Left ventricle myocardium inferior (tissue), 1 donor: ENCODE measurements at regions of chr2 and their contacts with region 1.

Region 1: GRCh38 chr2:73163483-73164367 is 38.6 kb upstream of the NOTO start:
- DNase-seq: peak; percentile 50
- H3K4me3 ChIP-seq: no peak overlapping the region
- H3K27ac ChIP-seq: no peak overlapping the region
- H3K4me1 ChIP-seq: no peaks in the 10 kb centered on the region
- H3K27me3 ChIP-seq: peaks cover 21% of the 10 kb centered on the region
- CTCF ChIP-seq: peak; percentile 92

Region 2: DNA sequence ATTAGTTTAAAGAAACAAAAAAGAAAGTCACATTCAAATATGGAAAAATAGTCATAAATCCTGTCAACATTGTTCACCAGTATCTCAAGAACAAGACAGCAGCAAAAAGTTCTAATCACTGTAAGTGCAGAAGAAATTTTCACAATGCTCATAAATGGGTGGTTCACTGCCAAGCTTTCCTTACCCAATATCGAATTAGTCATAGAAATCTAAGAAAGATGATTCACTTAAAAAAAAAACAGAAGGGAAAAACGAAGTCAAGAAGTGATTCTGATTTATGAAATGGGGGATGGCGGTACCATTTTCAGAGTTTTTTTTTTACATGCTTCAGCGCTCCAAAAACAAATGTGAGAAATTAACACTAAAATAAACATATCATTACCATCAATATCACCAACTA is 494.6 kb before region 1 on chr2:
- intact Hi-C with region 1: no loop called
- DNase-seq: no peak
- H3K4me3 ChIP-seq: no peak overlapping the region
- H3K27ac ChIP-seq: no peak overlapping the region
- H3K4me1 ChIP-seq: no peaks in the 10 kb centered on the region
- H3K27me3 ChIP-seq: no peaks in the 10 kb centered on the region
- CTCF ChIP-seq: no peak

Region 3: DNA sequence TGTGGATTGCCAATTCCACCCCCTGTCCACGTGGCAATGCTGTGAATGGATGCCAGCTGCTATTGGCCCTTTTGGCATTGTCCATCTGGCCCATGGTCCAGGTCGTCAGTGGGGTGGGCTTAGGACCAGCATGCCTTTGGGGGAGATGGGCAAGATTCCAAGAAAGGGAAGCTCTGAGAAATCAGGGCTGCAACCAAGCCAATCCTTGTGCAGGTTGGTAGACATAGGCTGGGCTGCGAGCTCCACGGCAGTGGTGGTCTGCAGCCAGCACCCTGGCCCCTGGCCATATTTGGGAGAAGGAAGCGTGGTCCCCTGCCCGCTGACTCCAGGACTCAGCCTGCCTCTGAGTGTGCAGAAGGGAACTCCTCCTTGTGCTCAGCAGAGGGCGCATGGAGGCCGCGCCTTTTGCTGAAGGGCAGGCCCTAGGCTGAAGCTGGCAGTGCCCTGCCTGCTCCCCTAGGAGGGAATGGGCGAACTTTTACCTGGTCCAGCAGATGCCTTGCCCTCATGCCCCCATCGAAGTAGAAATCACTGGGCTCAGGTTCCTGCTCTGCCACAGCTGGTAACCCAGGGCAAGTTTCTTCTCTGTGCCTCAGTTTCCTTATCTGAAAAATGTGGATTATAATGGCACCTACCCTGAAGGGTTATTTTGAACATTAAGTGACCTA is 271.1 kb before region 1 on chr2:
- intact Hi-C with region 1: loop called (anchors 5 kb)
- DNase-seq: peak; percentile 64
- H3K4me3 ChIP-seq: no peak overlapping the region
- H3K27ac ChIP-seq: no peak overlapping the region
- H3K4me1 ChIP-seq: peaks cover 45% of the 10 kb centered on the region
- H3K27me3 ChIP-seq: peaks cover 36% of the 10 kb centered on the region
- CTCF ChIP-seq: peak; percentile 81

Region 4: GRCh38 chr2:73085691-73086360 is 77.9 kb before region 1 on chr2:
- intact Hi-C with region 1: loop called (anchors 5 kb)
- DNase-seq: peak; percentile 84
- H3K4me3 ChIP-seq: no peak overlapping the region
- H3K27ac ChIP-seq: no peak overlapping the region
- H3K4me1 ChIP-seq: peaks cover 31% of the 10 kb centered on the region
- H3K27me3 ChIP-seq: no peaks in the 10 kb centered on the region
- CTCF ChIP-seq: peak; percentile 97

Region 5: DNA sequence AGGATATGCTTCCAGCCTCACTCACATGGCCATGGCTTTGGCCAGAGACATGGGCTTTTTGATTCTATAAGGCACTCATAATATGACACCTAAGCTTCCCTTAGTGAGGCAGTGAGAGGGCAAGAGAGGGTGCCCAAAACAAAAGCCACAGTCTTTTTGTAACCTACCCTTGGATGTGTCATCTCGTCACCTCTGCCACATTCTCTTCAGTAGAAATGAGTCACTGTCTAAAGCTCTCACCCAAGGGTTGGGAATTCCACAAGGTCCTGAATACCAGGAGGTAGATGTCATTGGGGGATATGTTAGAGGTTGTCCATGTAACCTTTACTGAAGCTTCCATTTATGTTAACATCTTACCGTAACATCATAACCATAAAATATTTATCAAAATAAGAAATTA is 330.3 kb after region 1 on chr2:
- intact Hi-C with region 1: no loop called
- DNase-seq: no peak
- H3K4me3 ChIP-seq: no peak overlapping the region
- H3K27ac ChIP-seq: no peak overlapping the region
- H3K4me1 ChIP-seq: no peaks in the 10 kb centered on the region
- H3K27me3 ChIP-seq: no peaks in the 10 kb centered on the region
- CTCF ChIP-seq: no peak